ENCODE measurements at regions of chrX and their contacts with region 1.

Region 1: GRCh38 chrX:19334945-19335626 is 8.6 kb upstream of the PDHA1 start:
- DNase-seq: peak; percentile 79
- H3K4me3 ChIP-seq: no peak overlapping the region
- H3K27ac ChIP-seq: no peak overlapping the region
- H3K4me1 ChIP-seq: no peaks in the 10 kb centered on the region
- CTCF ChIP-seq: peak; percentile 87

Region 2: GRCh38 chrX:18390941-18391538 is 944.0 kb before region 1 on chrX:
- CTCF ChIA-PET with region 1: no interaction called
- POLR2A ChIA-PET with region 1: no interaction called
- intact Hi-C with region 1: loop called (anchors 1 kb)
- DNase-seq: peak; percentile 65
- H3K4me3 ChIP-seq: no peak overlapping the region
- H3K27ac ChIP-seq: no peak overlapping the region
- H3K4me1 ChIP-seq: no peaks in the 10 kb centered on the region
- CTCF ChIP-seq: peak; percentile 79

Region 3: DNA sequence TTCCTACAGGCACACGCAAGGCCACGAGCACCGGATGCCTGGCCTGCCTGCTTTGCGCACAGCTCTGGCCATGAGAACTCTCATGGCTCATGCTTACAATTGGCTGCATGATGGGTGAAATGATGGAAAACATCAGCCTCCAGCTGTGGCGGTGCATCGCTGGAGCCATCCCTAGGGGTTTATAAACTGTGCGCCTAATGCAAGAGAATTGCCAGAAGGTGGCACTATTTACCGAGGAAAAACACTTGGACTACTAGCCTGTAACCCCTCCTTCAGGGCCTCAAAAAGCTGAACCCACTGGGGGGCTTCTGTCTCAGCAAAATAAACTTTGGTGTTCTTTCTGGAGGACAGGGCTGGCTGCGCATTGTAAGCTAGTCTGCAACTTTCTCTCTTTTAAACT is 403.1 kb before region 1 on chrX:
- CTCF ChIA-PET with region 1: no interaction called
- POLR2A ChIA-PET with region 1: no interaction called
- intact Hi-C with region 1: loop called (anchors 2 kb)
- DNase-seq: peak; percentile 24
- H3K4me3 ChIP-seq: no peak overlapping the region
- H3K27ac ChIP-seq: no peak overlapping the region
- H3K4me1 ChIP-seq: no peaks in the 10 kb centered on the region
- CTCF ChIP-seq: peak; percentile 65

Region 4: GRCh38 chrX:19017271-19017670 is 317.8 kb before region 1 on chrX:
- CTCF ChIA-PET with region 1: no interaction called
- POLR2A ChIA-PET with region 1: no interaction called
- intact Hi-C with region 1: loop called (anchors 10 kb)
- DNase-seq: peak; percentile 8
- H3K4me3 ChIP-seq: no peak overlapping the region
- H3K27ac ChIP-seq: no peak overlapping the region
- H3K4me1 ChIP-seq: no peaks in the 10 kb centered on the region
- CTCF ChIP-seq: peak; percentile 70

Region 5: GRCh38 chrX:19358526-19358925 is 23.4 kb after region 1 on chrX:
- CTCF ChIA-PET with region 1: no interaction called
- POLR2A ChIA-PET with region 1: no interaction called
- intact Hi-C with region 1: no loop called
- DNase-seq: no peak
- H3K4me3 ChIP-seq: no peak overlapping the region
- H3K27ac ChIP-seq: no peak overlapping the region
- H3K4me1 ChIP-seq: no peaks in the 10 kb centered on the region
- CTCF ChIP-seq: no peak

Region 6: DNA sequence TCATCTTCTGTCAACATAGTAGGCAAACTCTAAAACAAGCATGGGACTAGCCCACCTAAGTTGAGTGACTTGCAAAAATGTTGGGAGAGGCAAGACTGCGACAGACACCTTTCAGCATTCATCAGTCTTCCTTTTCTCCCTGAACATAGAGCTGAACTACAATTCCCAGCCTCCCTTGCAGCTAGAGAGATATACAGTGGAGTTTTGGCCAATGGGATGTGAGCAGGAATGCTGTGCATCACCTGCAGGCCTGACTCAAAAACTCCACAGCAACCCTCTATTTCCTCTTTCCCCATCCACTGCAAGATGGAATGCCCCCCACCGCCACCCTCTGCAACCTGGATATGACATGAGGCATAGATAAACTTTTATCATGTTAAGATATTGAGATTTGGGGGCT is 75.2 kb after region 1 on chrX:
- CTCF ChIA-PET with region 1: no interaction called
- POLR2A ChIA-PET with region 1: no interaction called
- intact Hi-C with region 1: no loop called
- DNase-seq: no peak
- H3K4me3 ChIP-seq: no peak overlapping the region
- H3K27ac ChIP-seq: no peak overlapping the region
- H3K4me1 ChIP-seq: no peaks in the 10 kb centered on the region
- CTCF ChIP-seq: no peak

Measured in OCI-LY7 (cell line).